ENCODE measurements at regions of chr12 and their contacts with region 1.

Region 1: GRCh38 chr12:95998611-95999286 is 2.6 kb upstream of the HAL start:
- DNase-seq: peak; percentile 49
- H3K4me3 Mint-ChIP-seq: no peak overlapping the region
- H3K27ac Mint-ChIP-seq: peak overlapping the region; percentile 24
- H3K4me1 Mint-ChIP-seq: peaks cover 15% of the 10 kb centered on the region
- H3K27me3 Mint-ChIP-seq: no peaks in the 10 kb centered on the region

Region 2: GRCh38 chr12:95877622-95878021 is 121.1 kb before region 1 on chr12:
- intact Hi-C with region 1: no loop called
- DNase-seq: no peak
- H3K4me3 Mint-ChIP-seq: no peak overlapping the region
- H3K27ac Mint-ChIP-seq: no peak overlapping the region
- H3K4me1 Mint-ChIP-seq: peaks cover 3% of the 10 kb centered on the region
- H3K27me3 Mint-ChIP-seq: no peaks in the 10 kb centered on the region

Region 3: DNA sequence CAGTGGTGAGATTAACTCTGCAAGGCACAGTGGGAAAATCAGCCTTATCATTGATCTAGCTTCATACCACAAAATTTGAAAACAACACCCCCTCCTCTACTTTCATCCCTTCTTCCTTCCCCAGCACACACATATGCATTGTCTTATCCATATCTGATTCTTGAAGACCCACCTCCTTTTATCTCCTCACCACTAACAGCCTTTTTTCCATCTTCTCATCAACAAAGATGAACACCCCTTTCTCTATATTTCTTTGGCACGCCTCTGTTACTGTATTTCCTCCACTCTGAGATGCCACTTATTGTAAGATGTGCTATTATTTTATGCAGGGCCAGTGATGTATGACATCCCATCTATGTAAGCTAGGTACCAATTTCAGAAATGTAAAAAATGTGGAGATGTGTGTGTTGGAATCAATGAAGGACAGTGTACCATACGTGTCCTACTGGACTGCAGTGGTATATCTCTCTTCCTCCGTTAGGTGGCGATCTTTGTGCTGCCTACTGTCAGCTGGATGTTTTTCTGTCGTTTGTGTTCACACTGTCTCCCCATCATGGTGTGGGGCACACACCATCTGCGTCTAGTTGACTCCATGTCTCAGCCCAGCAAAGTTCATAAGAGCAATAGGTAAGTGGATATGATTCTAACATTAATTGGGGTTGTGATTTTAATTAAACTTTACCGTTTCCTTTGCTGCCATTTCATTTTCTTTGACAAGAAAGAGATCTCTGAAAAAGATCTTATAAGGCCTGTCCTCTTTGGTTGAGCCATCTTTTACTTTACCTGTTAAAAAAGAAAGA is 80.4 kb before region 1 on chr12:
- intact Hi-C with region 1: loop called (anchors 1 kb)
- DNase-seq: peak; percentile 34
- H3K4me3 Mint-ChIP-seq: no peak overlapping the region
- H3K27ac Mint-ChIP-seq: no peak overlapping the region
- H3K4me1 Mint-ChIP-seq: no peaks in the 10 kb centered on the region
- H3K27me3 Mint-ChIP-seq: peaks cover 18% of the 10 kb centered on the region

Region 4: DNA sequence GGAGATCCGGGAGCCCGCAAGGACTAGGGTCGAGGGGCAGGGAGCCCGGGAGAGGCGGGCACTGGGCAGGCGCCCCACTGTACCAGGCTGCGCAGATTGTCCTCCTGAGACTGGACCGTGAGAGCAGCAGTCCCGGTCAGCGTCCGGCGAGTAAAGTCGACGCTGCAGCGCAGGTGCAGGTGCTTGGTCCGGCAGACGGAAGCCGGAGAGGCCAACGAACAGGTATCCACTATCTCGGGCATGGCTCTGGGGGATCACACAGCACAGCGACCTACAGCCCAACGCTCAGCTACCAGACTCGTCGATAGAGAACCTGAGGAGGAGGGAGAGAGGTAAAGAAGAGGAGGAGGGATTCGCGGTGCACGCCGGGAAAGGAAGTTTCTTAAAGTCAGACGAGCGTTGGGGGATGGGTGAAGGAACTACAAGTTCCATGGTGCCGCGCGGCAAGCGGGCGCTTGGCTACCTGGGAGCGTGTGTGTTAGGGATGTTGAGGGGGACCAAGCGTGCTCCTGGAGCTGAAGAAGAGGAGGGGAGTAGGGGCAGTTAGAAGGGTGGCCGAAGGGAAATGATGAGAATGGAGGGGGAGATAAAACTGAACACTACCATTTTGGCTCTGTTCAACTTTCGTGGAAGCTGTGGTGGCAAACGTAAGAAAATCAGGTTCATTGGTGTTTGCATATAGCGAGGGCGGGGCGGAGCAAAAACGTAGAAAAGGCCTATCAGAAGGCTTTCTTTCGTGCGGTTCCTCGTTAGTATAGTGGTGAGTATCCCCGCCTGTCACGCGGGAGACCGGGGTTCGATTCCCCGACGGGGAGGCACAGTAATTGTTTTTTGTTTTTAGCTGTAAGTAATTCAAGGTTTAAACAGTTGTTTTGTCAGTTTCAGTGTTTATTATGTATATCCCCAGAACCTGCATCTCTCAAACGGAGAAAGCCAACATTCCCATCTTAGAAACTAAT is 36.8 kb after region 1 on chr12 and contains the start of gene LTA4H:
- intact Hi-C with region 1: loop called (anchors 2 kb)
- DNase-seq: peak; percentile 94
- H3K4me3 Mint-ChIP-seq: no peak within 1 kb of the TSS
- H3K27ac Mint-ChIP-seq: no peak within 1 kb of the TSS
- H3K4me1 Mint-ChIP-seq: peaks cover 8% of the 10 kb centered on the region
- H3K27me3 Mint-ChIP-seq: no peaks in the 10 kb centered on the region
- total RNA-seq, gene LTA4H: 63.6 and 65.2 TPM in 2 replicates